CD4-positive, alpha-beta memory T cell (primary cell): ENCODE measurements at regions of chrX and their contacts with region 1.

Region 1: GRCh38 chrX:55160685-55161552 is 59.2 kb upstream of the PAGE5 start:
- DNase-seq: peak; percentile 90 to 94 (median 91)
- H3K4me3 ChIP-seq: peak overlapping the region; percentile 39 to 80
- H3K4me3 Mint-ChIP-seq: peak overlapping the region; percentile 85 to 94 (median 92)
- H3K27ac ChIP-seq: peak overlapping the region; percentile 92
- H3K27ac Mint-ChIP-seq: peak overlapping the region; percentile 93 to 100 (median 98)
- H3K4me1 ChIP-seq: peaks cover 17% of the 10 kb centered on the region
- H3K4me1 Mint-ChIP-seq: peaks cover 4 to 23% (median 10%) of the 10 kb centered on the region in 4 donors
- H3K27me3 ChIP-seq: no peaks in the 10 kb centered on the region
- H3K27me3 Mint-ChIP-seq: no peaks in the 10 kb centered on the region

Region 2: GRCh38 chrX:53683556-53684414 is 1477.1 kb before region 1 on chrX:
- CTCF ChIA-PET with region 1: no interaction called
- POLR2A ChIA-PET with region 1: no interaction called
- intact Hi-C with region 1: loop called (anchors 2 kb)
- DNase-seq: peak; percentile 88 to 97 (median 95)
- H3K4me3 ChIP-seq: peak overlapping the region; percentile 65 to 66
- H3K4me3 Mint-ChIP-seq: peak overlapping the region; percentile 88 to 97 (median 90)
- H3K27ac ChIP-seq: peak overlapping the region; percentile 94
- H3K27ac Mint-ChIP-seq: peak overlapping the region; percentile 87 to 99 (median 97)
- H3K4me1 ChIP-seq: peaks cover 41% of the 10 kb centered on the region
- H3K4me1 Mint-ChIP-seq: peaks cover 16 to 52% (median 33%) of the 10 kb centered on the region in 4 donors
- H3K27me3 ChIP-seq: no peaks in the 10 kb centered on the region
- H3K27me3 Mint-ChIP-seq: no peaks in the 10 kb centered on the region

Region 3: DNA sequence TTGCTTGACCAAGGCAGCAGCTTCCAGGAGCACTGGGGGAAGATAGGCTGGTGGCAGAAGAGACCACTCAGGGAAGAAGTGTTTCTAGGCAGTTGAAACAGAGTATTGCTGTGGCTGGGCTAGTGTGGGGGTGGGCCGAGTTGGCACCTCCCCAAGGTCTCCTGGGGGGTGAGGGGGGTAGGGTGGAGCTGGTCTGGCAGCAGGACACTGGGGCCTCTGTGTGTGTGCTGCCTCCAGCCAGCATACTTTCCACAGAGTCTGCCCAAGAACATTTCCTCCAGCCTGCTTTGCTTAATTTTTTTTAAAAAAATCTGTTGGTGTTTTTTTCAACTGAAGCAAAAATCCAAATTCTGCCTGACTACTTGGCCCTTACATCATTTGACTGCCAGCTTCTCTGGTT is 366.9 kb before region 1 on chrX:
- CTCF ChIA-PET with region 1: no interaction called
- POLR2A ChIA-PET with region 1: no interaction called
- intact Hi-C with region 1: no loop called
- DNase-seq: no peak
- H3K4me3 ChIP-seq: no peak overlapping the region
- H3K4me3 Mint-ChIP-seq: no peak overlapping the region
- H3K27ac ChIP-seq: no peak overlapping the region
- H3K27ac Mint-ChIP-seq: no peak overlapping the region
- H3K4me1 ChIP-seq: no peaks in the 10 kb centered on the region
- H3K4me1 Mint-ChIP-seq: no peaks in the 10 kb centered on the region
- H3K27me3 ChIP-seq: no peaks in the 10 kb centered on the region
- H3K27me3 Mint-ChIP-seq: peaks cover 0 to 2% of the 10 kb centered on the region in 2 donors

Region 4: GRCh38 chrX:54891573-54891972 is 269.3 kb before region 1 on chrX:
- CTCF ChIA-PET with region 1: no interaction called
- POLR2A ChIA-PET with region 1: no interaction called
- intact Hi-C with region 1: loop called (anchors 1 kb)
- DNase-seq: peak; percentile 31 to 43 (median 37)
- H3K4me3 ChIP-seq: no peak overlapping the region
- H3K4me3 Mint-ChIP-seq: no peak overlapping the region
- H3K27ac ChIP-seq: no peak overlapping the region
- H3K27ac Mint-ChIP-seq: no peak overlapping the region
- H3K4me1 ChIP-seq: no peaks in the 10 kb centered on the region
- H3K4me1 Mint-ChIP-seq: no peaks in the 10 kb centered on the region
- H3K27me3 ChIP-seq: no peaks in the 10 kb centered on the region
- H3K27me3 Mint-ChIP-seq: peaks cover 2 to 9% of the 10 kb centered on the region in 2 donors

Region 5: GRCh38 chrX:54999717-55000598 is 161.0 kb before region 1 on chrX and contains the start of gene APEX2:
- CTCF ChIA-PET with region 1: no interaction called
- POLR2A ChIA-PET with region 1: interaction called, 5 read pairs
- intact Hi-C with region 1: loop called (anchors 1 kb)
- DNase-seq: peak; percentile 83 to 91 (median 86)
- H3K4me3 ChIP-seq: peak within 1 kb of the TSS; percentile 63 to 84
- H3K4me3 Mint-ChIP-seq: peak within 1 kb of the TSS; percentile 94 to 97 (median 96)
- H3K27ac ChIP-seq: peak within 1 kb of the TSS; percentile 91
- H3K27ac Mint-ChIP-seq: peak within 1 kb of the TSS; percentile 92 to 99 (median 97)
- H3K4me1 ChIP-seq: peaks cover 17% of the 10 kb centered on the region
- H3K4me1 Mint-ChIP-seq: peaks cover 8 to 29% (median 15%) of the 10 kb centered on the region in 4 donors
- H3K27me3 ChIP-seq: no peaks in the 10 kb centered on the region
- H3K27me3 Mint-ChIP-seq: no peaks in the 10 kb centered on the region
- total RNA-seq, gene APEX2: 13.4 TPM

Region 6: DNA sequence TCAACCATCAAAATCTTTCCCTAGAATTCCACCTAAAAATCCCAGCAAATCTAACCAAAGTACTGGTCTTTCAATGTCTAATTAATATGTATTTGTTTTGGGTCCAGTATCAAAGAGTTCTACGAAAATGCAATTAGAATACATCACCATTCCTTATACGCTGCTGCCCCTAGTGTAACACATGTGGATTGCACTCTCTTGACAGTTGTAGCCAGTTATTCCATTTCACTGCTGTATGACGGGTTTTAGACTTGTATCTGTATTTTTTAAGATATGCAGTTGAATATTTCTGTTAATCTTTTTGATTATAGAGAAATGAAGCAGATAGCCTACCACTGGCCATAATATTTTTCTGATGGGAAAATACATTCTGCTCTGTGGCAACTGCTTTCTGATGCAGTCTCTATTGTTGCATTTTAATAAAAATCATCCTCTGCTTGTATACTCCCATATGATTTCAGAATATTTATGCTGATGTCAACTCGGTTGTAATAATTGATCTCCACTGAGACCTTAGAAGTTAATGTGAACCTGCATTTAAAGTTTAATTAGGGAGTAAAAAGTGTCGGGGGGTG is 103.2 kb before region 1 on chrX:
- CTCF ChIA-PET with region 1: interaction called, 5 read pairs
- POLR2A ChIA-PET with region 1: no interaction called
- intact Hi-C with region 1: loop called (anchors 1 kb)
- DNase-seq: peak in 4 of 5 donors; percentile 31 to 41 (median 40)
- H3K4me3 ChIP-seq: no peak overlapping the region
- H3K4me3 Mint-ChIP-seq: peak overlapping the region; percentile 64 to 87 (median 74)
- H3K27ac ChIP-seq: no peak overlapping the region
- H3K27ac Mint-ChIP-seq: peak overlapping the region; percentile 24 to 93 (median 74)
- H3K4me1 ChIP-seq: peaks cover 16% of the 10 kb centered on the region
- H3K4me1 Mint-ChIP-seq: peaks cover 8 to 25% (median 15%) of the 10 kb centered on the region in 4 donors
- H3K27me3 ChIP-seq: no peaks in the 10 kb centered on the region
- H3K27me3 Mint-ChIP-seq: no peaks in the 10 kb centered on the region

Region 7: GRCh38 chrX:55488593-55489313 is 327.8 kb after region 1 on chrX:
- CTCF ChIA-PET with region 1: no interaction called
- POLR2A ChIA-PET with region 1: interaction called, 15 read pairs
- intact Hi-C with region 1: no loop called
- DNase-seq: peak; percentile 66 to 74 (median 71)
- H3K4me3 ChIP-seq: peak overlapping the region; percentile 52 to 86
- H3K4me3 Mint-ChIP-seq: peak overlapping the region; percentile 93 to 97 (median 94)
- H3K27ac ChIP-seq: peak overlapping the region; percentile 83
- H3K27ac Mint-ChIP-seq: peak overlapping the region; percentile 93 to 98 (median 95)
- H3K4me1 ChIP-seq: peaks cover 10% of the 10 kb centered on the region
- H3K4me1 Mint-ChIP-seq: peaks cover 4 to 18% (median 12%) of the 10 kb centered on the region in 4 donors
- H3K27me3 ChIP-seq: no peaks in the 10 kb centered on the region
- H3K27me3 Mint-ChIP-seq: no peaks in the 10 kb centered on the region

Region 8: DNA sequence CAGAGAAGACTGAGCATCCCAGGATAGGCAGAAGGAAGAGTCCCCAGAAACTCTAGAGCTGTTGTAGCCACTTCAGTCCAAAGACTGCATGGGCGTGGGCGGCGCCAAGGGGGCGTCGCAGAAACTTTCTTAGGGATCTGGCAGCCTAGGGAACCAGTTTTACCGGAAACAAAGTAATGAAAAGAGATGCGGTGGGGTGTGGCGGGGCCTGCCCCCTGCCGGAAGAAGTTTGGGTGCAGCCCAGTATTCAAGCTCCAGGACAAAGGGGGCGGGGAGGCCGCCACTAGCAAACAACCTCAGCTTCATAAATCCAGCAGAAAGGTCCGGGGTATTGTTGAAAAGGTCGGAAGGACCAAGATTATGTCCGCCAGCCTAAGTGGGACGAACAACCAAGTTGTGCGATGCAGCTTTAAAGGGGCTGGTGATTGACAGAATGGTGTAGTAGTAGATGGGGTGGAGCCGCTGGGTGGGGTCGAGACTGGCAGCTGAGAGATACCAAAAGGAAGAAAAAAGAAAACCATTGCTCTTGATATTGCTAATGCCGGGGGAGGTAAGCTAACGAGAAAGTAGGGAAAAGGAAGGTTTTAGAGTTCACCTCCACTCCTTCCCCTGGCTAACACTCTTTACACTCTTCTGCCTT is 747.2 kb after region 1 on chrX:
- CTCF ChIA-PET with region 1: no interaction called
- POLR2A ChIA-PET with region 1: no interaction called
- intact Hi-C with region 1: loop called (anchors 2 kb)
- DNase-seq: peak; percentile 36 to 43 (median 39)
- H3K4me3 ChIP-seq: peak overlapping the region; percentile 47 to 78
- H3K4me3 Mint-ChIP-seq: peak overlapping the region; percentile 90 to 98 (median 92)
- H3K27ac ChIP-seq: peak overlapping the region; percentile 44
- H3K27ac Mint-ChIP-seq: peak overlapping the region; percentile 59 to 86 (median 73)
- H3K4me1 ChIP-seq: peaks cover 10% of the 10 kb centered on the region
- H3K4me1 Mint-ChIP-seq: peaks cover 8 to 24% (median 13%) of the 10 kb centered on the region in 4 donors
- H3K27me3 ChIP-seq: no peaks in the 10 kb centered on the region
- H3K27me3 Mint-ChIP-seq: no peaks in the 10 kb centered on the region